Panc1 (cell line): ENCODE measurements at regions of chr18 and their contacts with region 1.

Region 1: DNA sequence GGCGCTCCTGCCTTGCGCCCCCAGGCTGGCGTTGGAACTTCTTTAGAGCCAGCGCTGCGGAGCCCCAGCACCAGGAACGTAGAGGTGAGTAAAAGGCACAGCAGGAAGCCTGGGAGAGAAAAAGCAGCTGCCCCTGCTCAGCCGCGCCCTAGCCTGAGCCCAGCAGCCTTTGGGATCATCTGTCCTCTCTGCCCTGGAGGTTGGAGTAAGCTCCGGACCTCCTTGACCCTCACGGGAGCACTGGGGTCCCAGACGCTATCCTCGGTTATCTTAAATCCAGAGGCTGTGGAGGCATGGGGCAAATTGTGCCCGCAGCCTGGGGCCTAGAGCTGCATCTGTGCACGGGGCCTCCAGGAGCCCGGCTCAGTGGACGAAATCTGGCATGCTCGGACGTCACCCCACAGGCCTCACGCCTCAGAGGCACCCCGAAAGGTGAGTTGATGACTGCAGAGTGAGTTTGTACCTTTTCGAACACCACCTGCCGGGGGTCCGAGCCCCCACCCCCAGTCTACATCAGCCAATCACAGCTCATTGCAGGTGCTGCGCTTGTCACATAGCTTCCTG is 1.6 kb upstream of the SLC66A2 start:
- DNase-seq: no peak
- ATAC-seq: peak; percentile 13; the same call in 1 of the 2 replicates
- H3K4me3 ChIP-seq: no peak overlapping the region
- H3K27ac ChIP-seq: no peak overlapping the region
- H3K4me1 ChIP-seq: peaks cover 29% of the 10 kb centered on the region
- H3K27me3 ChIP-seq: no peaks in the 10 kb centered on the region
- CTCF ChIP-seq: no peak

Region 2: GRCh38 chr18:79964330-79965118 is 11.4 kb after region 1 on chr18 and contains the start of gene HSBP1L1:
- CTCF ChIA-PET with region 1: interaction called, 11 read pairs
- POLR2A ChIA-PET with region 1: interaction called, 12 read pairs
- in situ Hi-C with region 1: no loop called
- intact Hi-C with region 1: no loop called
- DNase-seq: no peak
- ATAC-seq: peak; percentile 87
- H3K4me3 ChIP-seq: peak within 1 kb of the TSS; percentile 69 to 80
- H3K27ac ChIP-seq: peak within 1 kb of the TSS; percentile 93
- H3K4me1 ChIP-seq: peaks cover 31% of the 10 kb centered on the region
- H3K27me3 ChIP-seq: no peaks in the 10 kb centered on the region
- CTCF ChIP-seq: no peak
- total RNA-seq, gene HSBP1L1: 45.4 TPM